A549 (cell line): ENCODE measurements at regions of chr6 and their contacts with region 1.

Region 1: GRCh38 chr6:149840345-149841075 is 23.6 kb downstream of the LRP11 start:
- DNase-seq: peak; percentile 76 to 89
- ATAC-seq: peak; percentile 96 to 97
- H3K4me3 ChIP-seq: no peak overlapping the region
- H3K27ac ChIP-seq: peak overlapping the region; percentile 48 to 73; a peak in 4 of 6 replicates
- H3K4me1 ChIP-seq: peaks cover 42% of the 10 kb centered on the region
- CTCF ChIP-seq: peak; percentile 62
- EP300 ChIP-seq: no peak
- POLR2A ChIP-seq: no peak
- RAD21 ChIP-seq: peak; percentile 71 to 74

Region 2: DNA sequence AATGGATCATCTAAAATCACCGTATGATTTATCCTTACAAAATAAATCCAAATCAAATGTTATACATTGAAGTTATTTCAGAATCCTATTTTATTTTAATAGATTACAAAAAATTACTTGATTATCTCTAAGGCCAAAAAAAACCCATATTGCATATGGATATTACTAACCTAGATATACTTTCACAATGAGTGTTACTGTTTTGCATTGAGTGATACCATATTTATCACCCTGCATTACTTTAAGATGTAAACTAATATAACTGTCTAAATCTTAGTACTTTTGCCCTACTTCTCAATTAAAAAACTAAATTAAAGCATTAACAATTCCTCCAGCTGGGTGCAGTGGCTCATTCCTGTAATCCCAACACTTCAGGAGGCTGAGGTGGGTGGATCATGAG is 305.8 kb before region 1 on chr6:
- CTCF ChIA-PET with region 1: no interaction called
- POLR2A ChIA-PET with region 1: no interaction called
- DNase-seq: no peak
- ATAC-seq: no peak
- H3K4me3 ChIP-seq: no peak overlapping the region
- H3K27ac ChIP-seq: no peak overlapping the region
- H3K4me1 ChIP-seq: no peaks in the 10 kb centered on the region
- CTCF ChIP-seq: no peak
- EP300 ChIP-seq: no peak
- POLR2A ChIP-seq: no peak
- RAD21 ChIP-seq: no peak

Region 3: DNA sequence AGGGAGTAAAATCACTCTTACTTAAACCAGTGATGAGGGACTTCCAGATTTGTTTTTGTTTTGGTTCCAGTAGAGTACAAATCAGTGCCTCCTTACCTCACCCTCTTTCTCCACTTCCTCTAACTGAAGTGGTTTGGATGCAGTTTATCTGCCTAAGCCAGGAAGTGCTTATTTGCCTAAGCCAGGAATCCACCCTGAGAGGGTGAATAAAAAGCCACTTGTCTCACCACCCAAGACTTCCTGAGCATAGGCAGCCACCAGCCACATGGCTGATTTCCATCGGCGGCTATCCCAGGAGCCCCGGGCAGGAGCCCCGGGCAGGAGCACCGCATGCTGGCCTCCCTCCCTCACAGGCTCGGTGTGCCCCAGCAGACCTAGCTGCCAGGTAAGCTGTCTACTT is 11.7 kb after region 1 on chr6:
- CTCF ChIA-PET with region 1: interaction called, 45 read pairs
- POLR2A ChIA-PET with region 1: no interaction called
- DNase-seq: no peak
- ATAC-seq: no peak
- H3K4me3 ChIP-seq: no peak overlapping the region
- H3K27ac ChIP-seq: peak overlapping the region; percentile 31 to 91; a peak in 4 of 6 replicates
- H3K4me1 ChIP-seq: peaks cover 81% of the 10 kb centered on the region
- CTCF ChIP-seq: no peak
- EP300 ChIP-seq: no peak
- POLR2A ChIP-seq: no peak
- RAD21 ChIP-seq: no peak

Region 4: GRCh38 chr6:149863697-149864577 is 23.4 kb after region 1 on chr6 and contains the start of gene LRP11:
- CTCF ChIA-PET with region 1: interaction called, 51 read pairs
- POLR2A ChIA-PET with region 1: interaction called, 6 read pairs
- DNase-seq: peak; percentile 82 to 87
- ATAC-seq: peak; percentile 87 to 91
- H3K4me3 ChIP-seq: peak within 1 kb of the TSS; percentile 65
- H3K27ac ChIP-seq: peak within 1 kb of the TSS; percentile 96 to 99
- H3K4me1 ChIP-seq: peaks cover 57% of the 10 kb centered on the region
- CTCF ChIP-seq: no peak
- EP300 ChIP-seq: no peak
- POLR2A ChIP-seq: peak; percentile 61
- RAD21 ChIP-seq: no peak
- polyA plus RNA-seq, gene LRP11: 57.7 and 59.2 TPM in 2 replicates

Region 5: DNA sequence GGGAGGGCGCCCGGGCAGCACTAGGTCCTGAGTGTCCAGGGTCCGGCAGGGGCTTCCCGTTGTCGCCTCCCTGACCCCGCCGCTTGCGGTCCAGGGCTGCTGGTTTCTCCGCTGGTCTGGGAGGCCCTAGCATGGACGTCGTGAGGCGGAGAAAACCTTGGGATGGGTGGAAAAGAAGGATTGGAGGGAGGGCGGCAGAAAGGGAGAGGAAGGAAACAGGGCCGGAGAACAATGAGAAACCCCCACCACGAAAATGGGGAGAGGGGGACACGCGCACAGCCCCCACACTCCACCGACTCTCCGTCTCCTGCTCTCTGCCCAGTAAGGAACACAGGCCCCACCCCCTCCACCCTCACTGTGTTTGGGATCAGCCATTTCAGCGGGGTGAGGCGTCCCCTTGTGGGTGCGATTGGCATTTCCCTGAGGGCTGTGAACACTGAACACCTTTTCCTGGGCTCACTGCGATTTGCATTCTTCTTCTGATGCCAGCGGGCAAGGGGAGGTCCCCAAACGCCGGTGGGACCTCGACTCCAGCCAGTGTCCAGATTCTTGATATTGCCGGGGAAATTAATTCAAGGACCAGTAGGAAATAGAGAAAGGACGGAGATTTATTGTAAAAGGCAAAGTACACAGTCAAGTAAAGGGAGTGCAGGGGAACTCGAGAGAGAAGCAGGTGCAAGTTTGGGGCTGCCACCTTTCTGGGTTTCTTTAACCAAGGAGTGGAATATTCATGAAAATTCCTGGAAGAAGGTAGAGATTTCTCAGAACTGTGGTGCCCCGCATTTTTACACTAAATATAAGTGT is 85.7 kb after region 1 on chr6:
- CTCF ChIA-PET with region 1: interaction called, 16 read pairs
- POLR2A ChIA-PET with region 1: no interaction called
- DNase-seq: peak; percentile 33 to 70
- ATAC-seq: peak; percentile 83 to 89
- H3K4me3 ChIP-seq: peak overlapping the region; percentile 39
- H3K27ac ChIP-seq: peak overlapping the region; percentile 65 to 88
- H3K4me1 ChIP-seq: peaks cover 11% of the 10 kb centered on the region; the same call in 1 of the 3 replicates
- CTCF ChIP-seq: peak; percentile 80
- EP300 ChIP-seq: no peak
- POLR2A ChIP-seq: no peak
- RAD21 ChIP-seq: peak; percentile 92 to 95

Region 6: GRCh38 chr6:150195996-150196417 is 355.5 kb after region 1 on chr6:
- CTCF ChIA-PET with region 1: no interaction called
- POLR2A ChIA-PET with region 1: no interaction called
- DNase-seq: no peak
- ATAC-seq: no peak
- H3K4me3 ChIP-seq: no peak overlapping the region
- H3K27ac ChIP-seq: no peak overlapping the region
- H3K4me1 ChIP-seq: peaks cover 11% of the 10 kb centered on the region
- CTCF ChIP-seq: no peak
- EP300 ChIP-seq: no peak
- POLR2A ChIP-seq: no peak
- RAD21 ChIP-seq: no peak